ENCODE measurements at regions of chr12 and their contacts with region 1.

Region 1: GRCh38 chr12:96399919-96400797 is at the start of gene CDK17:
- DNase-seq: peak; percentile 79 to 97 (median 90)
- ATAC-seq: peak; percentile 68
- H3K4me3 ChIP-seq: peak within 1 kb of the TSS; percentile 75 to 84
- H3K4me3 Mint-ChIP-seq: peak within 1 kb of the TSS; percentile 93
- H3K27ac ChIP-seq: peak within 1 kb of the TSS; percentile 84 to 85
- H3K27ac Mint-ChIP-seq: peak within 1 kb of the TSS; percentile 98
- H3K4me1 ChIP-seq: peaks cover 30% of the 10 kb centered on the region
- H3K4me1 Mint-ChIP-seq: peaks cover 47% of the 10 kb centered on the region
- H3K27me3 ChIP-seq: no peaks in the 10 kb centered on the region
- H3K27me3 Mint-ChIP-seq: no peaks in the 10 kb centered on the region
- CTCF ChIP-seq: no peak
- total RNA-seq, gene CDK17: 150 to 160 TPM

Region 2: DNA sequence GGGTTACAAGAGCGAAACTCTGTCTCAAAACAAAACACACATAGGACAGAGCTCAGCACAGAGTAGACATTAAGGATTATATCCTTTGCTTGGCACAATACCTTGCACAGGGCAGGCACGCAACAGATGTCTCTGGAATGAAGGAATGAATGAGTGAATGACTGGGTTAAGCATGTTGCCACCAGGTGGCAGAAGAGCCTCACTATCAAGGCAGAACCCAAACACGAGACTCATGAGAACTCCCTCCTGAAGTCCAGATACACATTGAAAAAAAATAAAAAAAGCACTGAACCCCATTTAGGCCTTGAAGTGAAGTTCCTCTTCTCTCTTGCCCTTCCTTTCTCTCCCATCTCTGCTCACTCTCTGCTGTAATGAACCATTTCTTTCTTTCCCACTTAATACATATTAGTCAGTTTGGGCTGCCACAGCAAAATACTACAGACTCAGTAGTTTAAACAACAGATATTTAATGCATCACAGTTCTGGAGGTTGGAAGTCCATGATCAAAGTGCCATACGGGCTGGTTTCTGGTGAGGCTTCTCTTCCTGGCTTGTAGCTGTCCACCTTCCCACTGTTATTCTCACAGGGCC is 338.2 kb before region 1 on chr12:
- CTCF ChIA-PET with region 1: interaction called, 8 read pairs
- POLR2A ChIA-PET with region 1: interaction called, 3 read pairs
- intact Hi-C with region 1: loop called (anchors 1 to 2 kb)
- DNase-seq: peak; percentile 61 to 89 (median 77)
- ATAC-seq: peak; percentile 94
- H3K4me3 ChIP-seq: no peak overlapping the region
- H3K4me3 Mint-ChIP-seq: no peak overlapping the region
- H3K27ac ChIP-seq: no peak overlapping the region
- H3K27ac Mint-ChIP-seq: peak overlapping the region; percentile 2
- H3K4me1 ChIP-seq: peaks cover 7% of the 10 kb centered on the region
- H3K4me1 Mint-ChIP-seq: peaks cover 14% of the 10 kb centered on the region
- H3K27me3 ChIP-seq: no peaks in the 10 kb centered on the region
- H3K27me3 Mint-ChIP-seq: no peaks in the 10 kb centered on the region
- CTCF ChIP-seq: peak; percentile 79

Region 3: DNA sequence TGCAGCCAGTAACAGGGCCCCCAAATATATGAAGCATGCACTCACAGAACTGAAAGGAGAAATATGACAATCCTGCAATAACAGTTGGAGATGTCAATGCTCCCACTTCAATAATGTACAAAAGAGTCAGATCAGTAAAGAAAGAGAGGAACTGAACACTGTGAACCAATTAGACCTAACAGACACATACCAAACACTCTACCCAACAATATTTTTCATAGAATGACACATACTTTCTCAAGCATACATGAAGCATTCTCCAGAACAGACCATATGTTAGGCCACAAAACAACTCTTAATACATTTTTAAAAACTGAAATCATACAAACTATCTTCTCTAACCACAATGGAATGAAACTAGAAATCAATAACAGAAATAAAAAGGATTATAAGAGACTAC is 125.8 kb before region 1 on chr12:
- CTCF ChIA-PET with region 1: interaction called, 13 read pairs
- POLR2A ChIA-PET with region 1: interaction called, 8 read pairs
- intact Hi-C with region 1: no loop called
- DNase-seq: no peak
- ATAC-seq: no peak
- H3K4me3 ChIP-seq: no peak overlapping the region
- H3K4me3 Mint-ChIP-seq: no peak overlapping the region
- H3K27ac ChIP-seq: peak overlapping the region in 1 of 2 experiments; percentile 10
- H3K27ac Mint-ChIP-seq: no peak overlapping the region
- H3K4me1 ChIP-seq: no peaks in the 10 kb centered on the region
- H3K4me1 Mint-ChIP-seq: peaks cover 20% of the 10 kb centered on the region
- H3K27me3 ChIP-seq: no peaks in the 10 kb centered on the region
- H3K27me3 Mint-ChIP-seq: no peaks in the 10 kb centered on the region
- CTCF ChIP-seq: no peak

Region 4: GRCh38 chr12:96327346-96327745 is 72.8 kb before region 1 on chr12:
- CTCF ChIA-PET with region 1: interaction called, 6 read pairs
- POLR2A ChIA-PET with region 1: interaction called, 13 read pairs
- intact Hi-C with region 1: loop called in 1 of 2 experiments (anchors 10 kb)
- DNase-seq: no peak
- ATAC-seq: peak; percentile 24
- H3K4me3 ChIP-seq: no peak overlapping the region
- H3K4me3 Mint-ChIP-seq: no peak overlapping the region
- H3K27ac ChIP-seq: no peak overlapping the region
- H3K27ac Mint-ChIP-seq: peak overlapping the region; percentile 70
- H3K4me1 ChIP-seq: peaks cover 37% of the 10 kb centered on the region
- H3K4me1 Mint-ChIP-seq: peaks cover 65% of the 10 kb centered on the region
- H3K27me3 ChIP-seq: no peaks in the 10 kb centered on the region
- H3K27me3 Mint-ChIP-seq: no peaks in the 10 kb centered on the region
- CTCF ChIP-seq: no peak

Region 5: GRCh38 chr12:96375841-96376604 is 24.1 kb before region 1 on chr12:
- CTCF ChIA-PET with region 1: interaction called, 12 read pairs
- POLR2A ChIA-PET with region 1: interaction called, 22 read pairs
- intact Hi-C with region 1: loop called (anchors 1 to 2 kb)
- DNase-seq: no peak
- ATAC-seq: no peak
- H3K4me3 ChIP-seq: no peak overlapping the region
- H3K4me3 Mint-ChIP-seq: peak overlapping the region; percentile 44
- H3K27ac ChIP-seq: peak overlapping the region in 1 of 2 experiments; percentile 79
- H3K27ac Mint-ChIP-seq: peak overlapping the region; percentile 83
- H3K4me1 ChIP-seq: peaks cover 65% of the 10 kb centered on the region
- H3K4me1 Mint-ChIP-seq: peaks cover 83% of the 10 kb centered on the region
- H3K27me3 ChIP-seq: no peaks in the 10 kb centered on the region
- H3K27me3 Mint-ChIP-seq: no peaks in the 10 kb centered on the region
- CTCF ChIP-seq: no peak

Region 6: DNA sequence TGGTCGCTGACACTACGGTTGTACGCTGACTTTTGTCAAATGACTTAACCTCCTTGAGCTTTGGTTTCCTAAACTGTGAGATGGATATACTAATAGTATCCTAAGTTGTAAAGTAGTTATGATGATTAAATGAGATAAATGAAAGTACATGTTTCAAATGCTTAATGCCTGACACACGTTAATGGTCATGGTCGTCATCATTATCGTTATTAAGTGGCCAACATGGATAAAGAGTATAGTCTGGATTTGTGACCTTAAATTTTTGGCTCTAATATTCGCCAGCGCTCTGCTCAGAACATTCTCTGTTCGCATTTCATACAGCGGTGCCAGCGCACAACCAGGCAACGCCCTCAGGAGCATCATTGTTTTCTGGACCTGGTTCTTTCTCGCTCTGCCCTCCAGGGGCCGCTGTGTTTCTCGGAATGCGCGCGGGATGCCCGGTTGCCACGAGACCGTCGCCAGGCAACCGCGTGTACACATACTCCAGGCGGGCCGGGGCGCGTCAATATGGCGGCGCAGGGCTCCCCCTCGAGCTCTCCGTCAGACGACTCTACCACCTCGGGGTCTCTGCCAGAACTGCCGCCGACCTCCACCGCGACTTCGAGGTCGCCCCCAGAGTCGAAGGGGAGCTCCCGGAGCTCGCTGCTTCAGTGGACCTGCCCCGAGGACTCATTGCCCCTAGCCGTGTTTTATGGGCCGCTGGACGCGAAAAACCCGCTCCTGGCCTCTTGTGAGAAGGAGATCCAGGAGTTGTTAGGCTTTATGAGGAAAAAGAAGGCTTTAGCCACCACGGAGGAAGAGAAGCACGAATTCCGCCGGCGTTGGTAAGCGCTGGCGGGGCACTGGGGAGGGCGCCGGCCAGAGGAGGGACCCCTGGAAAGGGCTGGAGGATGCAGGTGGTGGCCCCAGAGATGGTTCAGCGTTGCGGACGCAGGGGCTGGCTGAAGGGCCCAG is 89.2 kb after region 1 on chr12 and contains the start of gene CFAP54:
- CTCF ChIA-PET with region 1: interaction called, 25 read pairs
- POLR2A ChIA-PET with region 1: interaction called, 7 read pairs
- intact Hi-C with region 1: loop called (anchors 1 kb)
- DNase-seq: peak; percentile 91 to 98 (median 95)
- ATAC-seq: peak; percentile 88
- H3K4me3 ChIP-seq: peak within 1 kb of the TSS; percentile 72 to 75
- H3K4me3 Mint-ChIP-seq: peak within 1 kb of the TSS; percentile 91
- H3K27ac ChIP-seq: peak within 1 kb of the TSS; percentile 58 to 76
- H3K27ac Mint-ChIP-seq: peak within 1 kb of the TSS; percentile 82
- H3K4me1 ChIP-seq: peaks cover 23% of the 10 kb centered on the region
- H3K4me1 Mint-ChIP-seq: peaks cover 24% of the 10 kb centered on the region
- H3K27me3 ChIP-seq: no peaks in the 10 kb centered on the region
- H3K27me3 Mint-ChIP-seq: no peaks in the 10 kb centered on the region
- CTCF ChIP-seq: peak; percentile 85
- total RNA-seq, gene CFAP54: 1.0 to 1.2 TPM